ENCODE measurements at regions of chr2 and their contacts with region 1.

Region 1: GRCh38 chr2:88187038-88187676 is 17.0 kb downstream of the THNSL2 start:
- DNase-seq: peak; percentile 67 to 77 (median 68)
- ATAC-seq: peak; percentile 89
- H3K4me3 ChIP-seq: no peak overlapping the region
- H3K27ac ChIP-seq: no peak overlapping the region
- H3K4me1 ChIP-seq: peaks cover 0 to 3% of the 10 kb centered on the region in 2 experiments; a peak in 1 of 5 replicates
- H3K27me3 ChIP-seq: peaks cover 2 to 31% of the 10 kb centered on the region in 2 experiments; a peak in 3 of 5 replicates
- CTCF ChIP-seq: peak; percentile 81 to 88 (median 85)
- EP300 ChIP-seq: no peak
- POLR2A ChIP-seq: no peak
- RAD21 ChIP-seq: peak; percentile 76 to 87

Region 2: DNA sequence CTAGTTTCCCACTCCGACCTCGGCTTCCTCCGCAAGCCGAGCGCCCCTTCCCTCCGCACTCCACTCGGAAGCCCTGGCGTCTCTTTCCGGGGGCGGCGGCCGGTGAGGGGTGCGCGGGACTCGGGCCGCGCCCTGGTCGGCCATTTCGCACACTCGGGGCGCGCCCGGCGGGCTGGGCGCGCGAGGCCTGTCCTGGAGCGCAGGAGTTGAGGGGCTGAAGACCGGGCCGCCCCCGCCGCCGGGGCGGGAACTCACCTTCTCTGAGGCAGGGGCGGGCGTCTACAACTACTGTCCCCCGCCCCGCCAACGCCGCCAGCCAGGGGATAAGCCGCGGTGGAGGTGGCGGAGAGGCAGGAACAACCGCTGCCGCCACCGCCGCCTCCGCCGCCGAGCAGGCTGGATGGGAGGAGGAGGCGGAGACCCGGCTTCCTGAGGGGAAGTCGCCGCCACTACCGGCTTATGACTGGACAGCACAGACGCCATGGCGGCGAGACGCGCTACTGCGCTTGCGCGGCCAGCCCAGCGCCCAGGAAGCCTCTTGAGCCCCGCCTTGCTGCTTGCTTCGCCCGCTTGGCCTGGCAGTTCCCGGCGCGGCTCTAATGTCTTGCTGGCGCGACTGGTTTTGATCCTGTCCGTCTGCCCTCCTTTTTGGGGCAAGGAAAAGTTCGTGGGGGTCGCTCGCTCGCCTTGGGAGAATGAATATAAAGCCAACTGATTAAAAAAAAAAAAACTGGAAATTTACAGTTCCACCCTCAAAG is 131.6 kb before region 1 on chr2 and contains the start of gene KRCC1:
- CTCF ChIA-PET with region 1: interaction called, 3 read pairs
- POLR2A ChIA-PET with region 1: no interaction called
- in situ Hi-C with region 1: no loop called
- intact Hi-C with region 1: loop called (anchors 5 kb)
- DNase-seq: peak; percentile 94 to 97 (median 94)
- ATAC-seq: peak; percentile 90
- H3K4me3 ChIP-seq: peak within 1 kb of the TSS; percentile 79
- H3K27ac ChIP-seq: peak within 1 kb of the TSS; percentile 95
- H3K4me1 ChIP-seq: peaks cover 22 to 42% of the 10 kb centered on the region in 2 experiments
- H3K27me3 ChIP-seq: no peaks in the 10 kb centered on the region
- CTCF ChIP-seq: no peak
- EP300 ChIP-seq: peak; percentile 19; the same call in 1 of the 2 replicates
- POLR2A ChIP-seq: peak; percentile 96
- RAD21 ChIP-seq: 0 out of 4 replicates have a peak, but pooled peaks of 1 of the 2 experiments have one; percentile 5
- polyA plus RNA-seq, gene KRCC1: 2.1 TPM

Region 3: DNA sequence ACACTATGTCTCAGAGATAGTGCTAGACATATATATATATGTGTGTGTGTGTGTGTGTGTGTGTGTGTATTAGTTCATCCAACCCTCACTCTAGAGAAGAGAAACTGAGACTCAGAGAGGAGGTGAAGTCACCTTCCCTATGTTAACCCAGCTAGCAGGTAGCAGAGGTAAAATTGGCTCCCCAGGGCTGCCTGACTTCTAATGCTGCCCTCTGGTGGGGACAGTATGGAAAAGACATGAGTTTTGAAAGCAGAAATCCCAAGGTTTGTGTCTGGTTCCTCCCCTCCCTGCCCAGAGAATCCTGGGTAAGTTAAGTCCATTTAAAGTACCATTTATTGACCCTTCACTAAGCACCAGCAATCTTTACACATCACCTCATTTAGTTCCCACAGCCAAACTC is 120.7 kb after region 1 on chr2:
- CTCF ChIA-PET with region 1: interaction called, 10 read pairs
- POLR2A ChIA-PET with region 1: no interaction called
- in situ Hi-C with region 1: no loop called
- intact Hi-C with region 1: loop called (anchors 1 kb)
- DNase-seq: peak; percentile 26 to 61 (median 48)
- ATAC-seq: peak; percentile 75
- H3K4me3 ChIP-seq: no peak overlapping the region
- H3K27ac ChIP-seq: no peak overlapping the region
- H3K4me1 ChIP-seq: no peaks in the 10 kb centered on the region
- H3K27me3 ChIP-seq: no peaks in the 10 kb centered on the region; a peak in 1 of 5 replicates
- CTCF ChIP-seq: peak; percentile 67 to 69 (median 67)
- EP300 ChIP-seq: no peak
- POLR2A ChIP-seq: no peak
- RAD21 ChIP-seq: peak; percentile 38 to 75; a peak in 3 of 4 replicates

Region 4: GRCh38 chr2:88451811-88452565 is 264.8 kb after region 1 on chr2:
- CTCF ChIA-PET with region 1: interaction called, 11 read pairs
- POLR2A ChIA-PET with region 1: no interaction called
- in situ Hi-C with region 1: loop called (anchors 25 kb)
- intact Hi-C with region 1: loop called (anchors 1 kb)
- DNase-seq: no peak
- ATAC-seq: no peak
- H3K4me3 ChIP-seq: no peak overlapping the region
- H3K27ac ChIP-seq: no peak overlapping the region
- H3K4me1 ChIP-seq: no peaks in the 10 kb centered on the region
- H3K27me3 ChIP-seq: peaks cover 18 to 24% of the 10 kb centered on the region in 2 experiments
- CTCF ChIP-seq: no peak
- EP300 ChIP-seq: no peak
- POLR2A ChIP-seq: no peak
- RAD21 ChIP-seq: no peak

Region 5: DNA sequence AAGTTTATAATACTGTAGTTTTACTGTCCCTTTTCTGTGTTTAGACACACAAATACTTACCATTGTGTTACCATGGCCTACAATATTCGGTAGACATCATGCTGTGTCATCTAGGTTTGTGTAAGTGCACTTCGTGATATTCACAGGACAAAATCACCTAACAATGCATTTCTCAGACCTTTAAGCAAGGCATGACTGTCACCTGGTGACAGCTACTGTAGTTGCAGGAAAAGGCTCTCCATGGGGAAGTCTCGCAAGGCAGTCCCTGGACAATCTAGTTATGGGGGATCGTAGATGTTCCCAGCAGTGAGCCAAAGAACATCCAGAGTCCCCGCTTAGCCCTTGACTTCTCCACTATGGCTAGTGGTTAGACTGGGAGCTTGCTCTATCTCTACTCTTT is 367.0 kb after region 1 on chr2:
- CTCF ChIA-PET with region 1: interaction called, 9 read pairs
- POLR2A ChIA-PET with region 1: no interaction called
- in situ Hi-C with region 1: no loop called
- intact Hi-C with region 1: loop called (anchors 5 kb)
- DNase-seq: peak in 1 of 4 experiments; percentile 26
- ATAC-seq: peak; percentile 77
- H3K4me3 ChIP-seq: no peak overlapping the region
- H3K27ac ChIP-seq: no peak overlapping the region
- H3K4me1 ChIP-seq: peaks cover 0 to 6% of the 10 kb centered on the region in 2 experiments; a peak in 2 of 5 replicates
- H3K27me3 ChIP-seq: peaks cover 6 to 10% of the 10 kb centered on the region in 2 experiments; a peak in 4 of 5 replicates
- CTCF ChIP-seq: peak; percentile 49 to 64 (median 59); a peak in 5 of 6 replicates
- EP300 ChIP-seq: no peak
- POLR2A ChIP-seq: no peak
- RAD21 ChIP-seq: peak; percentile 55 to 77

Measured in K562 (cell line).